PC-9 (cell line): ENCODE measurements at regions of chr7 and their contacts with region 1.

Region 1: GRCh38 chr7:86448856-86449255 is 194.9 kb upstream of the GRM3 start:
- DNase-seq: no peak
- H3K4me3 ChIP-seq: no peak overlapping the region
- H3K27ac ChIP-seq: no peak overlapping the region
- H3K4me1 ChIP-seq: no peaks in the 10 kb centered on the region
- H3K27me3 ChIP-seq: no peaks in the 10 kb centered on the region
- CTCF ChIP-seq: no peak

Region 2: GRCh38 chr7:86407291-86407690 is 41.6 kb before region 1 on chr7:
- CTCF ChIA-PET with region 1: no interaction called
- POLR2A ChIA-PET with region 1: no interaction called
- intact Hi-C with region 1: no loop called
- DNase-seq: no peak
- H3K4me3 ChIP-seq: no peak overlapping the region
- H3K27ac ChIP-seq: no peak overlapping the region
- H3K4me1 ChIP-seq: no peaks in the 10 kb centered on the region
- H3K27me3 ChIP-seq: no peaks in the 10 kb centered on the region
- CTCF ChIP-seq: no peak

Region 3: GRCh38 chr7:86431761-86432160 is 17.1 kb before region 1 on chr7:
- CTCF ChIA-PET with region 1: no interaction called
- POLR2A ChIA-PET with region 1: no interaction called
- intact Hi-C with region 1: no loop called
- DNase-seq: no peak
- H3K4me3 ChIP-seq: no peak overlapping the region
- H3K27ac ChIP-seq: no peak overlapping the region
- H3K4me1 ChIP-seq: no peaks in the 10 kb centered on the region
- H3K27me3 ChIP-seq: no peaks in the 10 kb centered on the region
- CTCF ChIP-seq: no peak

Region 4: DNA sequence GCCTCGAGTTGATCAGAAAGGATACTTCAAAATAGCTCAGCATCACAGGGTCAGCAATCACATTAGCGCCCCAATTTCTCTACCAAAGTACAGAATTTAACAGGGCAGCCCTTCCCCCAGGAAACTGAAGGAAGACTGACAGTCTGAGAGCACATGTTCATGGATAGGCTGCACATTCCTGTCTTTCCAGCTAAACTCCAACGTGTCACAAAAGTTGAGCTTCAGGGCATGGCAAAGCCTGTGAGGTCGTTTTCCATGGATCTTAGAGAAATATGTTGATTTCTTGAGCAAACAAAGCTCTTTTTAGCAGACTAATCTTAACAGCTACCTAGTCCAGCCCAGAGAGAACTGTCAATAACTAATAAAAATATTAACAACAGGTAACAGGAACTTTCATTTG is 402.7 kb after region 1 on chr7:
- CTCF ChIA-PET with region 1: interaction called, 16 read pairs
- POLR2A ChIA-PET with region 1: no interaction called
- intact Hi-C with region 1: no loop called
- DNase-seq: no peak
- H3K4me3 ChIP-seq: no peak overlapping the region
- H3K27ac ChIP-seq: no peak overlapping the region
- H3K4me1 ChIP-seq: peaks cover 14% of the 10 kb centered on the region
- H3K27me3 ChIP-seq: no peaks in the 10 kb centered on the region
- CTCF ChIP-seq: no peak

Region 5: GRCh38 chr7:86963599-86964230 is 514.9 kb after region 1 on chr7:
- CTCF ChIA-PET with region 1: no interaction called
- POLR2A ChIA-PET with region 1: no interaction called
- intact Hi-C with region 1: no loop called
- DNase-seq: no peak
- H3K4me3 ChIP-seq: no peak overlapping the region
- H3K27ac ChIP-seq: no peak overlapping the region
- H3K4me1 ChIP-seq: no peaks in the 10 kb centered on the region
- H3K27me3 ChIP-seq: no peaks in the 10 kb centered on the region
- CTCF ChIP-seq: no peak